OCI-LY7 (cell line): ENCODE measurements at regions of chr16 and their contacts with region 1.

Region 1: DNA sequence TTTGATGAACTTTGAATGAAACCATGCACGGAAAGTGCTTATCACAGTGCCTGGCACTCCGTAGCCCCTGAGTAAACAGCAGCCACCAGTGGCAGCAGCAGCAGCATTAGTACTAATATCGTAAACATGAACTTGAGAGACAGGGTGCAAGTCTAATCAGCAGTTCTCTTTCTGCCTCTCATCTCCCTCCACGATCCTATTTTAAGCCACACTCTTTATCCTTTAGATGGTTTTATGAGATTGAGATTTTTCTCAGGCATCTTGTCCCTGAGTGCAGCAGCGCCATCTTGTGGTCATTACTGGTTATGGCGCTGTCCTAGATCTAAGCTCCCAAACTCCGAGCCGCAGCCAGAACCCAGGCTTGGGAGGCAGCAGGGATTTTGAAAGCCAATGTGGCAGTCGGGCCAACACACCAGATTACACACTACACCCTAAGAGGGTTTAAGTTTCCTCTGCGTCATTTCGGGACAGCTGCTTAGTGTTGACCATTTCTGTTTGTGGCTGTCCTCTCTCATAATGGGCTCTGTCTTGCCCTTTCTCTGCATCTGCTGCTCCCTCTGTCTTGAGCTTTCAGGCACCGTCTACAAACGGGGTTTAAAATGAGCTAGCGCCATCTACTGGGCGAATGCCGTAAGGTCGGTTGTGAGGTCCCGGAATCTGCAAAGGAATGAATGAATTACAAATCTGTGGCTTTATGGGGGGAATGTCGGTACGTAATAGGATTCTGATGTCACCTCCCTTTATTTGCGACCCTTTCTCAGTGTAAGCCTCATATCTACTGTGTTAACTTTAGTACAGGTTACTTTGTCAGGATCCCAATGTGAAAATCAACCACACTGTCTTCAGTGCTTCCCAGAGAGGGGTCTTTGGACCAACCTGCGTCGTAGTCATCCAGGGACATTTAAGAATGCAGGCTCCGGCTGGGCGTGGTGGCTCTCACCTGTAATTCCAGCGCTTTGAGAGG is 64.5 kb downstream of the CYLD start:
- DNase-seq: peak; percentile 88
- H3K4me3 ChIP-seq: peak overlapping the region; percentile 45
- H3K27ac ChIP-seq: no peak overlapping the region
- H3K4me1 ChIP-seq: no peaks in the 10 kb centered on the region
- CTCF ChIP-seq: peak; percentile 99

Region 2: DNA sequence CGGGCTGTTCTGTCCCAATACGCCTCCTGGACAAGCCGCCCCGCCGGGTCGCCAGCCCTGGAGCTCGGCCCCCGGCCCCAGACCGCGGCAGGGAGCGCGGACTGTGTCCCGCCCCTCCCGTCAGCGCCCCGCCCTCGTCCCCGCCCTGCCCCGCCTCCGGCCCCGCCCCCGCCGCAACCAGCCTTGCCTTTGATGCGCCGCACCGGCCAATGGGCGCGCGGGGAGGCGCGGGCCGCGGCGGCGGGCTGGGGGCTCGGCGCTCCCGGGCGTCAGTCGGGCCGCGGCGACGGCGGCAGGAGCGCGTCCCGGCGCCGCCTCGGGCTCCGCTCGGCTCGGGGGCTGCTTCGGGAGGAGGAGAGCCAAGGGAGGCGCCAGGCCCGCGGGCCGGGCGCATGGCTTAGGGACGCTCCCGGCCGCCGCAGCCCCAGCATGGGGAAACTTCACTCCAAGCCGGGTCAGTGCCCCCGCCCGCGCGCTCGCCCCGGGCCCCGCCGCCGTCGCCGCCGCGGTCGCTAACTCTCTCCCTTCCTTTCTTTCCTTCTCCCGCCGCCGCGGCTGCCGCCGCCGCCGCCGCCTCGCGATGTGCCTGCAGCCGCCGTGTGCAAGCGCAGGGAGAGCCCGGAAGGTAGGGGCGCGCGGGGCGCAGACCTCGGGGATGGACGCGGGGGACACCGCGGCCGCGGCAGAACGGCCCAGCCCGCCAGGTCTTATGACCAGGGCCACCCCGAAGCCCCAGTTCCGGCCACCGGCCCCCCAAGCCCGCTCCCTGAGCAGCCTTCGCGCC is 258.1 kb before region 1 on chr16 and contains the start of gene NKD1:
- CTCF ChIA-PET with region 1: no interaction called
- POLR2A ChIA-PET with region 1: no interaction called
- intact Hi-C with region 1: loop called (anchors 2 kb)
- DNase-seq: peak; percentile 71
- H3K4me3 ChIP-seq: peak within 1 kb of the TSS; percentile 66
- H3K27ac ChIP-seq: no peak within 1 kb of the TSS
- H3K4me1 ChIP-seq: no peaks in the 10 kb centered on the region
- CTCF ChIP-seq: no peak
- total RNA-seq, gene NKD1: 0.06 TPM in 1 of 2 replicates, not detected in the other

Region 3: GRCh38 chr16:50671644-50672260 is 134.6 kb before region 1 on chr16:
- CTCF ChIA-PET with region 1: interaction called, 15 read pairs
- POLR2A ChIA-PET with region 1: interaction called, 3 read pairs
- intact Hi-C with region 1: loop called (anchors 1 kb)
- DNase-seq: peak; percentile 50
- H3K4me3 ChIP-seq: no peak overlapping the region
- H3K27ac ChIP-seq: no peak overlapping the region
- H3K4me1 ChIP-seq: no peaks in the 10 kb centered on the region
- CTCF ChIP-seq: peak; percentile 90

Region 4: DNA sequence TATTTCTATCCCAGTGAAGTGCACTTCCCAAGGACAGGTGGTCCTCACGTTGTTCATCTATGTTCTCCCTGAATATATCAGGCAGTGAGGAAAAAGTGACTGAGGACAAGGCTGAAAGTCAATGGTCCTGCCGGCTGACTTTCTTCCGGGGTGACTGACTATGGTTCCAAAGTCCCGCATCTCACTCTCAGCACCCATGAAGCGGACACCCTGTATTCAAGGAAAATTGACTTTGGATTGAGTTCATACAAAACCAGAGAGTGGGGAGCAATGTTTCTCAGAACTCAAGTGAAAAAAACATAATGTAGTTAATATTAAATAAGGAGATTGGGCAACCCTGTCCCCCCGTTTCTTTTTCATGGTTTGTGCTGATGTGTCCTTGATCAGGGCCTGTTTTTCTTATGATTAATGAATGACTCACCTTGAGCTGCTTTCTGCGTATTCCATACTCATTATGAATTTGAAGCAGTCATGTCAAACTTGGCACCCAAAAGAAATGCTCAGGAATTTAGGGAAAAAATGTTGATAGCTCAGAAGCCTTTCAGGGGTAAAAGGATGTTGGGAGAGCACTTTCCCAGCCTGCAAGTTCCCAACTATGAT is 119.5 kb after region 1 on chr16:
- CTCF ChIA-PET with region 1: no interaction called
- POLR2A ChIA-PET with region 1: no interaction called
- intact Hi-C with region 1: no loop called
- DNase-seq: no peak
- H3K4me3 ChIP-seq: no peak overlapping the region
- H3K27ac ChIP-seq: no peak overlapping the region
- H3K4me1 ChIP-seq: no peaks in the 10 kb centered on the region
- CTCF ChIP-seq: no peak